Activated T-helper 1 cell treated with anti-CD3 and anti-CD28 coated beads, Interleukin-12 subunit alpha, Interleukin-12 subunit beta, Interleukin-2, Interleukin-4 antibody, amounts not matched to agents 30 ng/mL and 10 ng/mL and 1 ng/mL, durations not matched to agents 14 hours and 24 hours and 36 hours (primary cell): ENCODE measurements at regions of chr10 and their contacts with region 1.

Region 1: GRCh38 chr10:63629363-63630084 is 108.3 kb downstream of the REEP3 start:
- DNase-seq: peak; percentile 71
- H3K4me3 Mint-ChIP-seq: peak overlapping the region; percentile 89
- H3K27ac Mint-ChIP-seq: peak overlapping the region; percentile 90
- H3K4me1 Mint-ChIP-seq: peaks cover 37% of the 10 kb centered on the region
- H3K27me3 Mint-ChIP-seq: no peaks in the 10 kb centered on the region

Region 2: DNA sequence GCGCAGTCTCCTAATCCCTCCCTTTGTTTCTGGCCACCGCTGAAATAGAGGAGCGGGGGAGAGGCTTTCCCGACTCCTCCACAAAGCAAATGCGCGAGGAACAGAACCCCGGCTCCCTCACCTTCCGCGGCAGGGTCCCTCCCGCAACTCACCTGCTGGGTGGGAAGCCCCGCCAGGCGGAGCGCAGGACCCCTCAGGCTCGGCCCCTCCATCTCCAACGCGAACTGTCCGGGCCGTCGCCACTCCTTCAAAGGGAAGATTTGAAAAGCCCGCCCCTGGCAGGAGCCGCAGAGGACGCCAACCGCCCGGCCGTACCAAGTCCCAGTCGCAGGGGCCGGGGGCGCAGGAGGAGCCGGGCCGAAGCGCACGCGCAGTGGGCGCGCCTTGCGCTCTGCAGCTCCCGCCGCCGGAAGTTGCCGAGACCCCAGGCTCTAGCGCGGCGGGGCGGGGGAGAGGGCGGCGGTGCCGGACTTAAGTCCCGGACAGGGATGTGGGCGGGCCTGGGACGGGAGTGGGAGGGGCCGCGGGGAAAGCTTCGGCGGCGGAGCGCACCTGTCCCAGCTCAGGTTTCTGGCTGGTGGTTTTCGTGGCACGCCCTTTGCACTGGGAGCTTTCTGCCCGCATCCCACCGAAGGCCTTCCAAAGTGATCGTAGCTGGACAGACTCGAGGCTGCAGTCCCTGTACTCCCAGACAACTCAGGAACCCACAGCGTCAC is 1361.0 kb before region 1 on chr10 and contains the start of gene RTKN2:
- intact Hi-C with region 1: loop called (anchors 5 kb)
- DNase-seq: peak; percentile 75
- H3K4me3 Mint-ChIP-seq: peak within 1 kb of the TSS; percentile 83
- H3K27ac Mint-ChIP-seq: no peak within 1 kb of the TSS
- H3K4me1 Mint-ChIP-seq: peaks cover 32% of the 10 kb centered on the region
- H3K27me3 Mint-ChIP-seq: peaks cover 27% of the 10 kb centered on the region
- total RNA-seq, gene RTKN2: 3.0 and 3.7 TPM in 2 replicates

Region 3: GRCh38 chr10:63166742-63167258 is 462.7 kb before region 1 on chr10:
- intact Hi-C with region 1: loop called (anchors 1 kb)
- DNase-seq: peak; percentile 17
- H3K4me3 Mint-ChIP-seq: no peak overlapping the region
- H3K27ac Mint-ChIP-seq: no peak overlapping the region
- H3K4me1 Mint-ChIP-seq: peaks cover 41% of the 10 kb centered on the region
- H3K27me3 Mint-ChIP-seq: no peaks in the 10 kb centered on the region

Region 4: DNA sequence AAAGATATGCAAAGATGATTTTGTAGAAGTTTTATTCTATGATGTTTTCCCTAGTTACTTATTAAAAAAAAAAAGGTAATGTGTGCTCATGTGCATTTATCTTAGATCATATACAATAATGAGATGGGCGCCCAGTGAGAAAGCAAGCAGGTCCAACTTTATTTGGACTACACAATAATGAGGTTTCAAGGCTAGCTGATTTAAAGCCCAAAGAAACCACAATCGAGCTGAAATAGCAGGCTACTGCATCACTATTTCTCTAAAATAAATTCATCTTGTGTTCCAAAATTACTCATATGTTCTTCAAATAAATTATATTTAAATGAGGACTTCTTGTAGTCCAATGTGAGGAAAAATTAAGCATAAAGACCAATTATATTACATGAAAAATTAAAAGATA is 273.8 kb before region 1 on chr10:
- intact Hi-C with region 1: loop called (anchors 1 kb)
- DNase-seq: no peak
- H3K4me3 Mint-ChIP-seq: no peak overlapping the region
- H3K27ac Mint-ChIP-seq: peak overlapping the region; percentile 54
- H3K4me1 Mint-ChIP-seq: peaks cover 14% of the 10 kb centered on the region
- H3K27me3 Mint-ChIP-seq: no peaks in the 10 kb centered on the region

Region 5: GRCh38 chr10:63573068-63573697 is 56.3 kb before region 1 on chr10:
- intact Hi-C with region 1: loop called (anchors 1 kb)
- DNase-seq: no peak
- H3K4me3 Mint-ChIP-seq: peak overlapping the region; percentile 15
- H3K27ac Mint-ChIP-seq: peak overlapping the region; percentile 72
- H3K4me1 Mint-ChIP-seq: peaks cover 20% of the 10 kb centered on the region
- H3K27me3 Mint-ChIP-seq: no peaks in the 10 kb centered on the region

Region 6: GRCh38 chr10:63614371-63614891 is 15.1 kb before region 1 on chr10:
- intact Hi-C with region 1: no loop called
- DNase-seq: no peak
- H3K4me3 Mint-ChIP-seq: no peak overlapping the region
- H3K27ac Mint-ChIP-seq: no peak overlapping the region
- H3K4me1 Mint-ChIP-seq: peaks cover 7% of the 10 kb centered on the region
- H3K27me3 Mint-ChIP-seq: no peaks in the 10 kb centered on the region